ENCODE measurements at regions of chr12 and their contacts with region 1.

Region 1: DNA sequence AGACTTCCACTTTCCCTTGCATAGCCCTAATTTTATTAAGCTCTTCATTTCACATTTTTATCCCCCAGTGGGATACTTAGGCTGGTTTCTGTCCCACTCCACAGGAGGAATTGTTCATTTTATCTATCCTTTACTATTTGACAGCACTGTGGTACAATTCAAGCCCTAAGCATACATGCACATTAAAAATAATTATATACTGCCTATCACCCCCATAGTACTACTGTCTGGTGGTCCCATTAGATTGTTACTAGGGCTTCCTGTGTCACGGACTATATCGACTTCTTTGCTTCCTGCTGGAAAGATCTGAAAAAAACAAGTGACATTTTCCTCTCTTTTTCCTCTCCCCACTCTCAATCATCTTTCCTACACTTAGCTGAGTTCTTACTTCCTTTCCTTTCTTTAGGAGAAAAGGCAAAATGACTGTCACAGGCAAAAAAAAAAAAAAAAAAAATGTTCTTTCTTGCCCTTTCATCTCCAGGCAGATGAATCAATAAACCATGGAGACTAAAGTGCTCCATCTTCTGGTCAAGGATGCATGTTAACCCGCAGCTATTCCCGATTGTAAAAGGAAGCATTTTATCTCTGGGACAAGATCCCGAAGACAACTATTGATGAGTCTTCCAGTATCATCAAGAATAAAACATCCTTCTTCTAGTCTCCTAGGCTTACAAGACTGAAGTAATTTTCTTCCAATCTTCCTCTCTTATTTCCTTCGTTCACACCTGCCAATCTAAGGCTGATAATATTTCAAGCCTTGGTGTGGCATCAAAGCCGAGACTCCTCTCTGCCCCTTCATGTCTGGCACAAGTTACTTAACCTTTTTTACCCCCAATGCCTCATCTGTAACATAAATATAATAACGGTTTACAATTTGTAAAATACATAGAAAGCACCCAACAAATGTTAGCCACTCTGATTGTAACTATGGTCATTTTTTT is 94.4 kb upstream of the PLEKHG7 start:
- DNase-seq: peak in 3 of 14 experiments; percentile 37 to 74 (median 65)
- ATAC-seq: peak; percentile 15
- H3K4me3 ChIP-seq: no peak overlapping the region
- H3K4me3 Mint-ChIP-seq: peak overlapping the region; percentile 18
- H3K27ac ChIP-seq: no peak overlapping the region
- H3K27ac Mint-ChIP-seq: peak overlapping the region; percentile 13
- H3K4me1 ChIP-seq: no peaks in the 10 kb centered on the region
- H3K4me1 Mint-ChIP-seq: peaks cover 11% of the 10 kb centered on the region
- H3K27me3 ChIP-seq: no peaks in the 10 kb centered on the region
- H3K27me3 Mint-ChIP-seq: no peaks in the 10 kb centered on the region
- CTCF ChIP-seq: peak; percentile 46

Region 2: GRCh38 chr12:92593734-92594402 is 14.6 kb before region 1 on chr12:
- CTCF ChIA-PET with region 1: interaction called, 21 read pairs
- POLR2A ChIA-PET with region 1: interaction called, 7 read pairs
- intact Hi-C with region 1: no loop called
- DNase-seq: peak; percentile 59 to 98 (median 72)
- ATAC-seq: peak; percentile 84
- H3K4me3 ChIP-seq: no peak overlapping the region
- H3K4me3 Mint-ChIP-seq: peak overlapping the region; percentile 28
- H3K27ac ChIP-seq: peak overlapping the region; percentile 96 to 97
- H3K27ac Mint-ChIP-seq: peak overlapping the region; percentile 91
- H3K4me1 ChIP-seq: peaks cover 31% of the 10 kb centered on the region
- H3K4me1 Mint-ChIP-seq: peaks cover 43% of the 10 kb centered on the region
- H3K27me3 ChIP-seq: no peaks in the 10 kb centered on the region
- H3K27me3 Mint-ChIP-seq: no peaks in the 10 kb centered on the region
- CTCF ChIP-seq: no peak

Measured in CD4-positive, alpha-beta T cell (primary cell).